ENCODE measurements at regions of chr3 and their contacts with region 1.

Region 1: GRCh38 chr3:14431892-14432834 is 29.8 kb downstream of the SLC6A6 start:
- DNase-seq: peak; percentile 76
- ATAC-seq: peak; percentile 75
- H3K4me3 Mint-ChIP-seq: peak overlapping the region; percentile 72
- H3K27ac Mint-ChIP-seq: peak overlapping the region; percentile 94
- H3K4me1 Mint-ChIP-seq: peaks cover 90% of the 10 kb centered on the region
- H3K27me3 Mint-ChIP-seq: no peaks in the 10 kb centered on the region
- CTCF ChIP-seq: no peak

Region 2: GRCh38 chr3:14124615-14125190 is 307.5 kb before region 1 on chr3 and contains the starts of genes CHCHD4 and TMEM43:
- CTCF ChIA-PET with region 1: no interaction called
- POLR2A ChIA-PET with region 1: interaction called, 4 read pairs
- intact Hi-C with region 1: loop called (anchors 1 kb)
- DNase-seq: peak; percentile 92
- ATAC-seq: peak; percentile 86
- H3K4me3 Mint-ChIP-seq: peak within 1 kb of the TSS; percentile 94
- H3K27ac Mint-ChIP-seq: peak within 1 kb of the TSS; percentile 87
- H3K4me1 Mint-ChIP-seq: peaks cover 40% of the 10 kb centered on the region
- H3K27me3 Mint-ChIP-seq: no peaks in the 10 kb centered on the region
- CTCF ChIP-seq: no peak
- total RNA-seq, gene CHCHD4: 9.2 and 9.8 TPM in 2 replicates
- total RNA-seq, gene TMEM43: 30.7 and 32.3 TPM in 2 replicates

Region 3: DNA sequence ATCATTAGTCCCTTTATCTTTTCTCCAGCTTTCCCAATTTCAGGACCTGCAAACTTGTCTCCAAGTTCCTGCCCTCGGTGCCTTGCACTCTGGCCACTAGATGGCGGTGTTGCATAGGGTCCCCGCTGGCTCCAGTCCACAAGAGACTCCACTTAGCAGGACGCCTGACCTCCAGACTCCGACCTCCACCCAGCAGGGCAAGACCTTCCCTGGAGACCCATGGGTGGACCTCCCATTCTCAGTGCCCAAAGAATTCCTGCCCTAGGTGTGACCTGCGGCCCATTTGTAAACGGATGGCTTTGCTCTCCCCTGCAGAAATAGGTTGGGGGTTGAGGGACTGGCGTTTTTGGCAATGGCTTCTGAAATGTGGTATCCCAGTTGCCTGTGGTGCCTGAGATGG is 170.9 kb before region 1 on chr3:
- CTCF ChIA-PET with region 1: interaction called, 7 read pairs
- POLR2A ChIA-PET with region 1: no interaction called
- intact Hi-C with region 1: loop called (anchors 1 kb)
- DNase-seq: peak; percentile 67
- ATAC-seq: peak; percentile 58
- H3K4me3 Mint-ChIP-seq: no peak overlapping the region
- H3K27ac Mint-ChIP-seq: no peak overlapping the region
- H3K4me1 Mint-ChIP-seq: no peaks in the 10 kb centered on the region
- H3K27me3 Mint-ChIP-seq: peaks cover 10% of the 10 kb centered on the region
- CTCF ChIP-seq: peak; percentile 68

Region 4: GRCh38 chr3:14452679-14453367 is 20.7 kb after region 1 on chr3:
- CTCF ChIA-PET with region 1: no interaction called
- POLR2A ChIA-PET with region 1: interaction called, 5 read pairs
- intact Hi-C with region 1: loop called (anchors 1 kb)
- DNase-seq: no peak
- ATAC-seq: no peak
- H3K4me3 Mint-ChIP-seq: no peak overlapping the region
- H3K27ac Mint-ChIP-seq: no peak overlapping the region
- H3K4me1 Mint-ChIP-seq: peaks cover 10% of the 10 kb centered on the region
- H3K27me3 Mint-ChIP-seq: no peaks in the 10 kb centered on the region
- CTCF ChIP-seq: no peak

Region 5: GRCh38 chr3:14467814-14468620 is 35.9 kb after region 1 on chr3:
- CTCF ChIA-PET with region 1: no interaction called
- POLR2A ChIA-PET with region 1: interaction called, 6 read pairs
- intact Hi-C with region 1: loop called (anchors 1 kb)
- DNase-seq: peak; percentile 40
- ATAC-seq: peak; percentile 68
- H3K4me3 Mint-ChIP-seq: no peak overlapping the region
- H3K27ac Mint-ChIP-seq: no peak overlapping the region
- H3K4me1 Mint-ChIP-seq: peaks cover 7% of the 10 kb centered on the region
- H3K27me3 Mint-ChIP-seq: no peaks in the 10 kb centered on the region
- CTCF ChIP-seq: peak; percentile 60

Region 6: DNA sequence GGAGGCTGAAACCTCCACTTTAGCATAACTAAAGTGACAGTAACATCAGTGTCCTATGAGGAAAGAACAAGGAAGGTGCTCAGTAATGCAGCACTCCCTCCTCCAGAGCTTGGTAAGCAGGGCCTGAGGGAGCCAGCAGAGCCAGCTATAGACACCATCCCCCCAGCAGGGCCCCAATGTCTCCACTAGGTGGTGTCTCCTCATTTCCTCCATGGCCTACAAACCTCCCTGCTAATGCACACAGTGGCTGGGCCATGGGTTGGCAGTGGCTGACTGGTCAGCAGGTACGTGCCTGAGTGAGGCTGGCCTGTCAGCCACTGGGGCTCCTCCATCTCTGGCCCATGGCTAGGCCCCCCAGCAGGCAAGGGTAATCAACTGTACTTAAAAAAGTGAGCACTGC is 619.4 kb after region 1 on chr3:
- CTCF ChIA-PET with region 1: no interaction called
- POLR2A ChIA-PET with region 1: no interaction called
- intact Hi-C with region 1: loop called (anchors 10 kb)
- DNase-seq: no peak
- ATAC-seq: peak; percentile 20
- H3K4me3 Mint-ChIP-seq: no peak overlapping the region
- H3K27ac Mint-ChIP-seq: peak overlapping the region; percentile 84
- H3K4me1 Mint-ChIP-seq: peaks cover 68% of the 10 kb centered on the region
- H3K27me3 Mint-ChIP-seq: no peaks in the 10 kb centered on the region
- CTCF ChIP-seq: no peak